Heart right ventricle (tissue), 16 donors: ENCODE measurements at regions of chr5 and their contacts with region 1.

Region 1: GRCh38 chr5:72355706-72356299 is 35.6 kb downstream of the PTCD2 start:
- DNase-seq: no peak
- ATAC-seq: peak in 7 of 8 donors; percentile 67 to 91 (median 75)
- H3K4me3 ChIP-seq: no peak overlapping the region
- H3K27ac ChIP-seq: no peak overlapping the region
- H3K4me1 ChIP-seq: peaks cover 0 to 19% (median 0%) of the 10 kb centered on the region in 9 donors
- H3K27me3 ChIP-seq: no peaks in the 10 kb centered on the region
- CTCF ChIP-seq: peak in 7 of 9 donors; percentile 41 to 66 (median 50)

Region 2: DNA sequence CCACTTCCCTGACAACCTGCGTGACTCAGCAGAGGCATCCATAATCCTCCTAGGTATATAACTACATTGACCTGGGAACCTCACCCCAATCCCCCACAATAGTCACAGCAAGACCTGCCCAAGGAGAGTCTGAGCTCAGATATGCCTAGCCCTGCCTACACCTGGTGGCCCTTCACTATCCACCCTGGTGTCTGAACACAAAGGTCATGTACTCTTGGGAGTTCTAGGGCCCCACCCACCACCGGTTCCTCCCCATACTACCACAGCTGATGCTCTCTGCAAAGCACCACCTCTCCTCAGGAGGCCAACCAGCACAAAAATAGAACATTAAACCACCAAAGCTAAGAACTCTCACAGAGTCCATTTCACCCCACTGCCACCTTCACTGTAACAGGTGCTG is 671.5 kb before region 1 on chr5:
- intact Hi-C with region 1: no loop called
- DNase-seq: no peak
- ATAC-seq: no peak
- H3K4me3 ChIP-seq: no peak overlapping the region
- H3K27ac ChIP-seq: no peak overlapping the region
- H3K4me1 ChIP-seq: no peaks in the 10 kb centered on the region
- H3K27me3 ChIP-seq: peaks cover 0 to 18% (median 11%) of the 10 kb centered on the region in 7 donors
- CTCF ChIP-seq: no peak

Region 3: DNA sequence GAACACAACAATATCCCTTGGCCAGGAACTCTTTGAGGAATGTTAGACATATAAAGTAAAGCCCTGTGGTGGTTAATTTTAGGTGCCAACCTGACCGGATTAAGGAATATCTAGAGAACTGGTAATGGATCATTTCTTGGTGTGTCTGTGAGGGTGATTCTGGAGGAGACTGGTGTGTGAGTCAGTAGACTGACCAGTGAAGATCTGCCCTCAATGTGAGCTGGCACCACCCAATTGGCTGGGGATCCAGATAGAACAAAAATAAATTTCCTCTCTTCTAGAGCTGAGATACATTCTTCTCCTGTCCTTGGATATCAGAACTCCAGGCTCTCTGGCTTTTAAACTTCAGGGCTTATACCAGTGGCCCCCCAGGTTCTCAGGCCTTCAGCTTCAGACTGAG is 404.5 kb after region 1 on chr5:
- intact Hi-C with region 1: loop called in 1 of 10 experiments (anchors 5 kb)
- DNase-seq: no peak
- ATAC-seq: no peak
- H3K4me3 ChIP-seq: no peak overlapping the region
- H3K27ac ChIP-seq: no peak overlapping the region
- H3K4me1 ChIP-seq: no peaks in the 10 kb centered on the region
- H3K27me3 ChIP-seq: no peaks in the 10 kb centered on the region
- CTCF ChIP-seq: no peak

Region 4: DNA sequence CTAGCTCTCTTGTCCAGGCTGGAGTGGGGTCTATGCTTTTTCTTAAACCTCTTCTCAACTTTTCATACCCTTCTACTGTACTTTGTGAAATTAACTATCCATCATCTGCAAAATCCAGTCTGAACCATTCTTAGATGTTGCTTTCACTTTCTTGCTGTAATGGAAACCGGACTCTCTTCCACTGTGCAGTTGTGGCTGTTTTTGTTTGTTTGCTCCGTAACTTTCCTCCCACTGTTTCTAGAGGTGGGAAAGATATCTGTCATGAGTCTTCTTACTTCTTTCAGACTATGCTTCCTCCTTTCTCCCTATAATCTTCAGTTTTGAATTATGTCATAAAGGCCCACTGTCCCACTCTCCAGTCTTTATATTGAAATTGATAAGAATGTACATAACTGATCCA is 467.1 kb after region 1 on chr5:
- intact Hi-C with region 1: loop called in 3 of 10 experiments (anchors 10 kb)
- DNase-seq: no peak
- ATAC-seq: no peak
- H3K4me3 ChIP-seq: no peak overlapping the region
- H3K27ac ChIP-seq: no peak overlapping the region
- H3K4me1 ChIP-seq: peaks cover 0 to 44% (median 33%) of the 10 kb centered on the region in 9 donors
- H3K27me3 ChIP-seq: no peaks in the 10 kb centered on the region
- CTCF ChIP-seq: no peak

Region 5: GRCh38 chr5:73103870-73104299 is 748.1 kb after region 1 on chr5:
- intact Hi-C with region 1: no loop called
- DNase-seq: no peak
- ATAC-seq: no peak
- H3K4me3 ChIP-seq: no peak overlapping the region
- H3K27ac ChIP-seq: no peak overlapping the region
- H3K4me1 ChIP-seq: no peaks in the 10 kb centered on the region
- H3K27me3 ChIP-seq: no peaks in the 10 kb centered on the region
- CTCF ChIP-seq: no peak